ENCODE measurements at regions of chr7 and their contacts with region 1.

Region 1: DNA sequence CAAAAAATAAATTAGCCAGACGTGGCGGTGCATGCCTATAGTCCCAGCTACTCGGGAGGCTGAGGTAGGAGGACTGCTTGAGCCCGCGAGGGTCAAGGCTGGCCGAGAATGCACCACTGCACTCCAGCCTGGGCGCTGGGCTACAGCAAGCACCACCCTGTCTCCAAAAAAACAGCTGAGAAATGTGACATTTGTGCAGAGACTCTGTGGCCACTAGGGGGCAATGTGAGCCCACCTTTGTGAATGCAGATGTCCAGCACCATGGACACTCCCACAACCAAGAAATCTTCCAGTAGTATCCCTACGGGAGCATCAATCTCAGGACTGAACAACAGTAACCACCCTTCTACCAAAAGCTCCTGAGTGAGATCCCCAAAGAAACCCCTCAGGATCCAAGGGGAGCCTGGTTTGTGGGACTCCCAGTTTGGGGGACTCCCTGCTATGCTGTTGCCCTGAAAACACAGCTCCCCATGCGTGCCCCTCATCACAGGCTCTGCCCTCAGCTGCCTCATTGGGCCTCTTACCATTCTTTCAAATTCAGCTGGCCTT is 6.2 kb upstream of the AHCYL2 start:
- DNase-seq: peak; percentile 66 to 76
- ATAC-seq: peak; percentile 91 to 96
- H3K4me3 ChIP-seq: no peak overlapping the region
- H3K27ac ChIP-seq: no peak overlapping the region
- H3K4me1 ChIP-seq: peaks cover 0 to under 1% of the 10 kb centered on the region in 2 donors
- H3K27me3 ChIP-seq: no peaks in the 10 kb centered on the region
- CTCF ChIP-seq: peak; percentile 84 to 93 (median 92)
- POLR2A ChIP-seq: no peak

Region 2: DNA sequence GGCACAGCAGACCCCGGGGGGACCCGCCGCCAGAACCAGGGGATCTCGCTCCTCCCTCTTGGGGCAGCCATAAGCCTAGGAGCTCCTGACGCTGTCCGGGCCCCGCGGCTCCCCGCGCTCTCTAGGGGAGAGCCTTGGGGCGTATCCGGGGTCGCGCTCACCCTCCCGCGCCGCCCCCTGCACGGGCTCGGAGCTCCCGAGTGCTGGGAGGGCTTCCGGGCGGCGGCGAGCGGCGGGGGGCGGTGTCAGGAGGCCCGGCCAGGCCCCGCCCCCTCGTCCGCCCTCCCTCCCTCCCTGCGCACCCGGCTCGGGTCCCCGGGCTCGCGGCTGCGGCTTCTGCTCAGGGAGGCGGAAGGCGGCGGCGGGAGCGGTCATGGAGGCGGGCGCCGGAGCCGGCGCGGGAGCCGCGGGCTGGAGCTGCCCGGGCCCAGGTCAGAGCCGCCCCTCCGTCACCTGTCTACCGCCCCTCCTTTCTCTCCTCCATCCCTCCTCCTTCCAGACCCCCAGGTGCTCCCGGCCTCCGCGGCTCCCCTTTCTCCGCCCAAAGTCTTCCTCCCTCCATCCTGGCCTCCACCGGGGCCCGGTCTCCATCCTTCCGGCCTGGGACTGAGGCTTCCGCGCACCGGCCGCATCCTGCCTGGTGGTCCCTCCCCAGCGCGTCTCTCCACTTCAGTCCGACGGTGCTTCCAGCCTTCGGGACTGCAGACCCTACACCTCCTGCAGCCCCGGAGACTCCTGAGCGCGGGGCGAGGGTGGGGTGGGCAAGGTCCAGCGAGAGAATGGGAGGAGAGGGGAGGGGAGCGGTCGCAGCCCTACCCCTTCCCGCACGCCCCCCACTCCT is 427.2 kb before region 1 on chr7:
- in situ Hi-C with region 1: no loop called
- intact Hi-C with region 1: no loop called
- DNase-seq: peak; percentile 38 to 58
- ATAC-seq: peak; percentile 43 to 66
- H3K4me3 ChIP-seq: peak overlapping the region; percentile 69 to 82 (median 74)
- H3K27ac ChIP-seq: peak overlapping the region; percentile 48 to 72 (median 56)
- H3K4me1 ChIP-seq: peaks cover 21 to 30% of the 10 kb centered on the region in 2 donors
- H3K27me3 ChIP-seq: no peaks in the 10 kb centered on the region
- CTCF ChIP-seq: no peak
- POLR2A ChIP-seq: peak; percentile 47 to 57

Region 3: GRCh38 chr7:129072479-129073011 is 146.0 kb before region 1 on chr7:
- in situ Hi-C with region 1: no loop called
- intact Hi-C with region 1: no loop called
- DNase-seq: no peak
- ATAC-seq: no peak
- H3K4me3 ChIP-seq: no peak overlapping the region
- H3K27ac ChIP-seq: no peak overlapping the region
- H3K4me1 ChIP-seq: no peaks in the 10 kb centered on the region
- H3K27me3 ChIP-seq: peaks cover 0 to 3% (median 0%) of the 10 kb centered on the region in 3 donors
- CTCF ChIP-seq: no peak
- POLR2A ChIP-seq: no peak

Region 4: GRCh38 chr7:129262324-129262723 is 43.7 kb after region 1 on chr7:
- in situ Hi-C with region 1: no loop called
- intact Hi-C with region 1: no loop called
- DNase-seq: no peak
- ATAC-seq: no peak
- H3K4me3 ChIP-seq: no peak overlapping the region
- H3K27ac ChIP-seq: no peak overlapping the region
- H3K4me1 ChIP-seq: peaks cover 12% of the 10 kb centered on the region in 2 donors
- H3K27me3 ChIP-seq: no peaks in the 10 kb centered on the region
- CTCF ChIP-seq: no peak
- POLR2A ChIP-seq: no peak

Region 5: GRCh38 chr7:129298268-129298893 is 79.8 kb after region 1 on chr7:
- in situ Hi-C with region 1: loop called (anchors 5 to 10 kb)
- intact Hi-C with region 1: loop called (anchors 1 kb)
- DNase-seq: peak in 1 of 2 donors; percentile 32
- ATAC-seq: no peak
- H3K4me3 ChIP-seq: no peak overlapping the region
- H3K27ac ChIP-seq: no peak overlapping the region
- H3K4me1 ChIP-seq: peaks cover 16 to 27% of the 10 kb centered on the region in 2 donors
- H3K27me3 ChIP-seq: no peaks in the 10 kb centered on the region
- CTCF ChIP-seq: peak; percentile 58 to 77 (median 66)
- POLR2A ChIP-seq: no peak

Region 6: DNA sequence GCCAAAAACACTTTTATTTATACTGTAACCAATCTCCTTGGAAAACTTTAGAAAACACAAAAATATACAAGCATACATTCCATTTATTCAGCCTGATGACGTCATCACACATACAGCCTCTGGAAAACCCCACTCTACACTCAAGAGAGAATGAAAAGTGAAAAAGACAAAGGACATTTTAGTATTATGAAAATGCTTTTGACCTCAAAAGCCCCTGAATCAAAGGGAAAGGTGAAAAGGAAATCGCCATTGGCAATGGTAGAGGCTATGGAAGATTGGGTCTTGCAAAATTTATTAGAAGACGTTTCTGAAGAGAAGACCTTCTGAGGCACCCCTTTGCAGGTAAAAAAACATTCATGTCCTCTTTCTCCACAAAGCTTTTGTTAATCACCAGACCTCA is 132.7 kb after region 1 on chr7:
- in situ Hi-C with region 1: no loop called
- intact Hi-C with region 1: no loop called
- DNase-seq: no peak
- ATAC-seq: no peak
- H3K4me3 ChIP-seq: no peak overlapping the region
- H3K27ac ChIP-seq: no peak overlapping the region
- H3K4me1 ChIP-seq: peaks cover 18 to 23% of the 10 kb centered on the region in 2 donors
- H3K27me3 ChIP-seq: no peaks in the 10 kb centered on the region
- CTCF ChIP-seq: no peak
- POLR2A ChIP-seq: no peak

Measured in gastrocnemius medialis (tissue), 4 donors.